ENCODE measurements at regions of chr2 and their contacts with region 1.

Region 1: DNA sequence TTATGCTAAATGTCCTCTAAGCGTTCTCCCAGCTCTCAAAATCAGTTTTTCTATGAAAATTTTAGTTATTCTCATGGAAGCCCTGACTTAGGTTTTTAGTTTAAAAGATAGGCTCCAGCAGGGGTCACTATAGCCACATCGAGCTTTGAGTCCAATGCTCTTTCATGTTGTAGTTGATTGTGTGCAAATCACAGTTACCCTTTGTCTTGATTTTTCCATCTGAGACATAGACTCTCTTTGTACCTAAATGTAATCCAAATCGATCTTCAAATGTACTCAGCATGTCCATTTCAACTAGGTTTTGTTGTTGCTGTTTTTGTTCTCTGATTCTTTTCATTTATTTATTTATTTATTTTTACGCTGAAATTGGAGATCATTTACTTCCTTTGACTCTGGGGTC is 26.4 kb upstream of the MSTN start:
- DNase-seq: peak; percentile 67
- H3K4me3 ChIP-seq: no peak overlapping the region
- H3K27ac ChIP-seq: no peak overlapping the region
- H3K4me1 ChIP-seq: no peaks in the 10 kb centered on the region
- H3K27me3 ChIP-seq: no peaks in the 10 kb centered on the region
- CTCF ChIP-seq: peak; percentile 67

Region 2: DNA sequence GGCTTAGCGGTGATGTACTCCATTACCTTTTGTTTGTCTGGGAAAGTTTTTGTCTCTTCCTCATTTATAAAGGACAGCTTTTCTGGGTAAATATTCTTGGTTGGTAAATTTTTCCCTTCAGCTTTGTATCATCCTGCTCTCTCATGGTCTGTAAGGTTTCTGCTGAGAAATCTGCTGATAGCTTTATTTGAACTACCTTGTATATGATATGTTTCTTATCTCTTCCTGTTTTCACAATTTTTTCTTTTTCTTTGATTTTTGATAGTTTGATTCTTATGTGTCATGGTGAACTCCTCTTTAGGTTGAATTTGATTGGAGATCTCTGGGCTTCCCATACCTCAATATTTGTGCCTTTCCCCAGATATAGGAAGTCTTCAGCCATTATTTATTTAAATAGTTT is 71.1 kb before region 1 on chr2:
- intact Hi-C with region 1: no loop called
- DNase-seq: no peak
- H3K4me3 ChIP-seq: no peak overlapping the region
- H3K27ac ChIP-seq: no peak overlapping the region
- H3K4me1 ChIP-seq: no peaks in the 10 kb centered on the region
- H3K27me3 ChIP-seq: no peaks in the 10 kb centered on the region
- CTCF ChIP-seq: no peak

Region 3: GRCh38 chr2:190277234-190278112 is 188.6 kb after region 1 on chr2:
- intact Hi-C with region 1: loop called (anchors 2 kb)
- DNase-seq: no peak
- H3K4me3 ChIP-seq: no peak overlapping the region
- H3K27ac ChIP-seq: no peak overlapping the region
- H3K4me1 ChIP-seq: no peaks in the 10 kb centered on the region
- H3K27me3 ChIP-seq: no peaks in the 10 kb centered on the region
- CTCF ChIP-seq: peak; percentile 30

Region 4: DNA sequence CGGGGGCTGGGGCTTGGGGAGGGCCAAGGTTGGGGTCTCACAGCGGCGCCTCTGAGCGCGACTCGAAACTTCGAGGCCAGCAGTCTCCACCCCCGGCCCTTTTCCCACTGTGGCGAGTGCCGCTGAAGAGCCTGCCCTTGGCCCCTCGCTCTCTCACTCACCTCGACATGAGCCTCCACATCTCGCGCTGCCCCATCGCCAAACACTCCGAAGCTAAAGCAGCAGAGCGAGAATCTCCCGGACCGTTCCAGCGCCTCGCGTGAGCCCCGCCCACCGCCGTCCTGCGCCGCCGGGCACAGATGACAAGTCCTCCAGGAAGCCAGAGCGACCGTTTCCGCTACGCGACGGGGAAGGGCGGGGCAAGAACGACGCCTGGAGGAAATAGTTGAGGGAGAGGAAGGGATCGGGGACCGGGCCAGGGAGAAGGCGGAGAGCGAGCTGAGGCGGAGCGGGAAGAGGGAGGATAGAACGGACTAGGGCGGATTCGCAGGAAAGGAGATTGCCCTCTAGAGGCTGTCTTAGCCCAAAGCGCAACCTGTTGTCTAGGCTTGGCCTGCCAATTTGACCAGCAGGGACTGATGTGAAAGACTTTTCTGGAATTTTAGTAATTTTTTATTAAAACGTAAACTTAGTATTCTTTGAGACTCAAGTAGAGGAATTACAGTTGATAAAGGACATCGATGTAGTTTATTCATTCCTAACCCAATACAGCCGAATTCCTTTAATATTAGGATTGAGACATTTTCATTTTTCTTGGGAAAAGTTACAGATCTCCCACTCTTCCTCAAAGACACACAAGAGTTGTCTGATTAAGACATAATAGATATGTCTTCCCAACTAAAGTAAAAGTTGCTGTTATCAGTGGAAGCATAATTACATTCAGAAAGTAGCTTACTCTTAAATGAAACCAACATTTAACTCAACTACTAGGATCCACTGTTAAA is 230.9 kb after region 1 on chr2 and contains the start of gene HIBCH:
- intact Hi-C with region 1: loop called (anchors 10 kb)
- DNase-seq: peak; percentile 100
- H3K4me3 ChIP-seq: peak within 1 kb of the TSS; percentile 66
- H3K27ac ChIP-seq: peak within 1 kb of the TSS; percentile 94
- H3K4me1 ChIP-seq: peaks cover 3% of the 10 kb centered on the region
- H3K27me3 ChIP-seq: no peaks in the 10 kb centered on the region
- CTCF ChIP-seq: peak; percentile 71
- total RNA-seq, gene HIBCH: 47.2 to 71.1 TPM

Region 5: GRCh38 chr2:190369635-190370034 is 280.7 kb after region 1 on chr2:
- intact Hi-C with region 1: loop called (anchors 5 kb)
- DNase-seq: no peak
- H3K4me3 ChIP-seq: no peak overlapping the region
- H3K27ac ChIP-seq: no peak overlapping the region
- H3K4me1 ChIP-seq: no peaks in the 10 kb centered on the region
- H3K27me3 ChIP-seq: no peaks in the 10 kb centered on the region
- CTCF ChIP-seq: no peak

Region 6: GRCh38 chr2:190528521-190529001 is 439.6 kb after region 1 on chr2:
- intact Hi-C with region 1: loop called (anchors 10 kb)
- DNase-seq: no peak
- H3K4me3 ChIP-seq: no peak overlapping the region
- H3K27ac ChIP-seq: no peak overlapping the region
- H3K4me1 ChIP-seq: no peaks in the 10 kb centered on the region
- H3K27me3 ChIP-seq: no peaks in the 10 kb centered on the region
- CTCF ChIP-seq: no peak